ENCODE measurements at regions of chr7 and their contacts with region 1.

Region 1: DNA sequence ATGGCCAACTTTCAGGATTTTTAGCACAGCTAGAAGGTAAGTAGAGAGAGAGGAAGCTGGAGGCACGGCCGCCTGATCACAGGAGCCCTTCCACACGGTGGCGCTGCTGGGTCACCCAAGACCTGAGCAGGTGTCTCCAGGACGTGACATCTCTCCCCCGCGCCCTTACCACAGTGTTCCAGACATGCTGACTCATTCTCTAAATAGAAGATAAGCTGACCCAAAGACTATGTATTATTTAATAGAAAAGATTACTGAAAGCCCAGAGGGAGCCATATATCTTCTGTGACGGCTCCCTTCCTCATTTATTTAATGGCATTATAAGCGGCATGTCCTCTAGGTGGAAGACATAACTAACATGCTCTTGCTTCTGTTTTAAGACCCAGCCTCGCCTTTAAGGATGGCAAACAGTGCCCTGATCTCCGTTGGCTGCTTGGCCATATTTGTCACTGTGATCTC is 26.0 kb upstream of the MALSU1 start:
- DNase-seq: peak; percentile 98
- ATAC-seq: peak; percentile 97
- H3K4me3 Mint-ChIP-seq: peak overlapping the region; percentile 59
- H3K27ac Mint-ChIP-seq: peak overlapping the region; percentile 47
- H3K4me1 Mint-ChIP-seq: peaks cover 12% of the 10 kb centered on the region
- H3K27me3 Mint-ChIP-seq: peaks cover 12% of the 10 kb centered on the region
- CTCF ChIP-seq: peak; percentile 75

Region 2: GRCh38 chr7:23062452-23062851 is 210.7 kb before region 1 on chr7:
- CTCF ChIA-PET with region 1: no interaction called
- POLR2A ChIA-PET with region 1: no interaction called
- intact Hi-C with region 1: no loop called
- DNase-seq: no peak
- ATAC-seq: peak; percentile 30
- H3K4me3 Mint-ChIP-seq: no peak overlapping the region
- H3K27ac Mint-ChIP-seq: no peak overlapping the region
- H3K4me1 Mint-ChIP-seq: no peaks in the 10 kb centered on the region
- H3K27me3 Mint-ChIP-seq: no peaks in the 10 kb centered on the region
- CTCF ChIP-seq: no peak

Region 3: DNA sequence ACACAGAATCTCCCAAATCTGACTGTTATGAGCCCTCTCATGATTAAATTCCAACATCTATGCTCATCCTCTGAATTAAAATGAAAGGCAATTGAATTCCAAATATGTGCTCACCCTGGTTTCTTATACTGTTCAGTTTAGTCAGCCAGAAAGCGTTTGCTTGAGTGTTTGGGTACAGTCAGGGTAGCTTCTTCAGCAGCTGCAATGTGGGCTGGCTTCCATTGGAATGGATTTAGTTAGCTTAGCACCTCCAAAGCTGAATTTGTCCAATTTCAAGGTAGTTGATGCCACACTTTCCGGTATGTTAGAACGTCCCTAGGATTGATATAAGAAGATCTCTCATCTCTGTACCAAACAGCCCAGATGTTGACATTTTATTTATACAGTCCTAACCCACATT is 158.3 kb before region 1 on chr7:
- CTCF ChIA-PET with region 1: no interaction called
- POLR2A ChIA-PET with region 1: no interaction called
- intact Hi-C with region 1: no loop called
- DNase-seq: no peak
- ATAC-seq: no peak
- H3K4me3 Mint-ChIP-seq: no peak overlapping the region
- H3K27ac Mint-ChIP-seq: no peak overlapping the region
- H3K4me1 Mint-ChIP-seq: peaks cover 15% of the 10 kb centered on the region
- H3K27me3 Mint-ChIP-seq: no peaks in the 10 kb centered on the region
- CTCF ChIP-seq: no peak

Region 4: GRCh38 chr7:23291957-23292560 is 18.9 kb after region 1 on chr7:
- CTCF ChIA-PET with region 1: interaction called, 31 read pairs
- POLR2A ChIA-PET with region 1: interaction called, 3 read pairs
- intact Hi-C with region 1: no loop called
- DNase-seq: no peak
- ATAC-seq: no peak
- H3K4me3 Mint-ChIP-seq: no peak overlapping the region
- H3K27ac Mint-ChIP-seq: no peak overlapping the region
- H3K4me1 Mint-ChIP-seq: peaks cover 10% of the 10 kb centered on the region
- H3K27me3 Mint-ChIP-seq: no peaks in the 10 kb centered on the region
- CTCF ChIP-seq: no peak

Region 5: GRCh38 chr7:23347682-23348180 is 74.6 kb after region 1 on chr7:
- CTCF ChIA-PET with region 1: interaction called, 57 read pairs
- POLR2A ChIA-PET with region 1: interaction called, 3 read pairs
- intact Hi-C with region 1: loop called (anchors 5 kb)
- DNase-seq: peak; percentile 32
- ATAC-seq: peak; percentile 58
- H3K4me3 Mint-ChIP-seq: no peak overlapping the region
- H3K27ac Mint-ChIP-seq: peak overlapping the region; percentile 37
- H3K4me1 Mint-ChIP-seq: peaks cover 44% of the 10 kb centered on the region
- H3K27me3 Mint-ChIP-seq: no peaks in the 10 kb centered on the region
- CTCF ChIP-seq: no peak

Region 6: GRCh38 chr7:23419845-23420244 is 146.7 kb after region 1 on chr7:
- CTCF ChIA-PET with region 1: interaction called, 10 read pairs
- POLR2A ChIA-PET with region 1: interaction called, 3 read pairs
- intact Hi-C with region 1: no loop called
- DNase-seq: no peak
- ATAC-seq: no peak
- H3K4me3 Mint-ChIP-seq: no peak overlapping the region
- H3K27ac Mint-ChIP-seq: no peak overlapping the region
- H3K4me1 Mint-ChIP-seq: peaks cover 10% of the 10 kb centered on the region
- H3K27me3 Mint-ChIP-seq: peaks cover 4% of the 10 kb centered on the region
- CTCF ChIP-seq: no peak

Region 7: GRCh38 chr7:23474094-23474828 is 201.1 kb after region 1 on chr7:
- CTCF ChIA-PET with region 1: interaction called, 18 read pairs
- POLR2A ChIA-PET with region 1: interaction called, 4 read pairs
- intact Hi-C with region 1: loop called (anchors 5 kb)
- DNase-seq: peak; percentile 89
- ATAC-seq: peak; percentile 88
- H3K4me3 Mint-ChIP-seq: peak overlapping the region; percentile 66
- H3K27ac Mint-ChIP-seq: peak overlapping the region; percentile 37
- H3K4me1 Mint-ChIP-seq: peaks cover 21% of the 10 kb centered on the region
- H3K27me3 Mint-ChIP-seq: peaks cover 56% of the 10 kb centered on the region
- CTCF ChIP-seq: no peak

Region 8: GRCh38 chr7:23712368-23713284 is 439.5 kb after region 1 on chr7:
- CTCF ChIA-PET with region 1: interaction called, 9 read pairs
- POLR2A ChIA-PET with region 1: no interaction called
- intact Hi-C with region 1: loop called (anchors 10 kb)
- DNase-seq: no peak
- ATAC-seq: no peak
- H3K4me3 Mint-ChIP-seq: no peak overlapping the region
- H3K27ac Mint-ChIP-seq: no peak overlapping the region
- H3K4me1 Mint-ChIP-seq: no peaks in the 10 kb centered on the region
- H3K27me3 Mint-ChIP-seq: no peaks in the 10 kb centered on the region
- CTCF ChIP-seq: peak; percentile 84